Activated T-helper 1 cell treated with anti-CD3 and anti-CD28 coated beads, Interleukin-12 subunit alpha, Interleukin-12 subunit beta, Interleukin-2, Interleukin-4 antibody, amounts not matched to agents 30 ng/mL and 10 ng/mL and 1 ng/mL, durations not matched to agents 14 hours and 24 hours and 36 hours (primary cell): ENCODE measurements at regions of chr1 and their contacts with region 1.

Region 1: DNA sequence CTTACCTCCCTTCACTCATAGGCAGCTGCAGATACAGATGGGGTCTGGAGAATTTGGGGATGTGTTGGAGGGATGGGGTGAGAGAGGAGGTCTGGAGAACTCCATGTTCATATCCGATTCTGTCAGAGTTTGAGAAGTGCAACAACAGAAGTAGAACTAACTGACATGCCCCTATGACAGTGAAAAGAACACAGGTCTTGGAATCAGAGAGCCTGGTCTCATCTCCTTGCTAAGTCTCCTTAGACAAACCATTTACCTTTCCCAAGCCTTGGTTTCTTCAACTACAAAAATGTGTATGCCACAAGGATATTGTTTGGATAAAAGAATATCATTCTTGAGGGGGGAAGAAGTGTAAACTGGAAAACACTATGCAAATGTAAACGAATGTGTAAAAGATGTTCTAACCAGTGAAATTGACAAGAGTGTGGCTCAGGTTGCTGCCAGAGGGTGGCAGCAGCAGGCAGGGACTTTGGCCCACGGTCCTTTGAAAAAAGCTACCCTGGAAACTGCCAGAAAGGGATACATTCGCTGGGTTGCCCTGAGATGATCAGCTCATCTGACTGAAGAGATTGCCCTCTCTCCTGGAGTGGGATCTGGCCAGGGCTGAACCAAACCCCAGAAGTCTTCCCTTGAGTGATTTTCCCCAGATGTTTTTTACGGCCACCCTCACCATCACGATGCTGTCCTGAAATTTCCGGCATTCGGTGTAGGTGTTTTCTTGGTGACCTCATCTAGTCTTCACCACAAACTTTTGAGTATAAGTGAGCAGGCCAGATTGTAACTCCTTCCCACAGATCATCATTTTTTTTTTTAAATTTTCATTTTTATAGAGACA is 17.0 kb upstream of the CD2 start:
- DNase-seq: peak; percentile 70
- H3K4me3 Mint-ChIP-seq: peak overlapping the region; percentile 66
- H3K27ac Mint-ChIP-seq: peak overlapping the region; percentile 99
- H3K4me1 Mint-ChIP-seq: peaks cover 79% of the 10 kb centered on the region
- H3K27me3 Mint-ChIP-seq: no peaks in the 10 kb centered on the region

Region 2: GRCh38 chr1:116556289-116557006 is 180.8 kb before region 1 on chr1:
- intact Hi-C with region 1: loop called (anchors 2 kb)
- DNase-seq: peak; percentile 67
- H3K4me3 Mint-ChIP-seq: peak overlapping the region; percentile 9
- H3K27ac Mint-ChIP-seq: peak overlapping the region; percentile 77
- H3K4me1 Mint-ChIP-seq: peaks cover 86% of the 10 kb centered on the region
- H3K27me3 Mint-ChIP-seq: no peaks in the 10 kb centered on the region

Region 3: DNA sequence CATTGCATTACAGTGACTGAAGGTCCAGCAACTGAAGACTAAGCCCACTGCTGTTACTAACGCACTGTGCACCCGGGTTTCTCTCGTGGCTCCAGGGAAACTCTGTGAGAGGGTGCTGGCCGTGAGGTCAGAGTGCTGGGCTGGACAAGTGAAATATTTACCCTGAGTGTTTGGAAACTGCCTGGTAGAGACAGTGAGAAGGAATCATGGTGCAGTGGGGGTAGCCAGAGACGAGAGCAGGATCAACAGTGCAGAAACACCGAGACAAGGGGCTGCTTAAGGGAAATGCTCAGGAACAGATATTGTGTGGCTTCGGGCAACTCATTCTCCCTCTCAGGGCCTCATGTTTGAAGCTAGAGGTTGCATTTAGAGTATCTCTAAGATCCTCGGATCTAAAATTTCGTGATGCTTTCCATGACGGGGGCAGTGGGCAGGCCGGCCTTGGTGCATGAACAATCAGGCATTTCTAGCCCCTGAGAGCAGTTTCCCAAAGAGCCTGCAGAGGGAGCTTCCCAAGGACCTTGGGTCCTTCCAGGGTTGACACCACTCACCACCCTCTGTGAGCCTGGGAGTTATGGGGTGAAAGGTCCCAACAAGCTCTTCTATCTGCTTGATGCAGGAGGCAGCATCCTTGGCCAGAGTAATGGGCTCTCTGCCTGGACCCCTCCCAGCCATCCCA is 26.7 kb after region 1 on chr1:
- intact Hi-C with region 1: loop called (anchors 1 kb)
- DNase-seq: peak; percentile 50
- H3K4me3 Mint-ChIP-seq: peak overlapping the region; percentile 84
- H3K27ac Mint-ChIP-seq: peak overlapping the region; percentile 100
- H3K4me1 Mint-ChIP-seq: peaks cover 95% of the 10 kb centered on the region
- H3K27me3 Mint-ChIP-seq: peaks cover 3% of the 10 kb centered on the region

Region 4: GRCh38 chr1:116878804-116879477 is 141.7 kb after region 1 on chr1:
- intact Hi-C with region 1: loop called (anchors 1 kb)
- DNase-seq: no peak
- H3K4me3 Mint-ChIP-seq: no peak overlapping the region
- H3K27ac Mint-ChIP-seq: no peak overlapping the region
- H3K4me1 Mint-ChIP-seq: peaks cover 21% of the 10 kb centered on the region
- H3K27me3 Mint-ChIP-seq: no peaks in the 10 kb centered on the region

Region 5: GRCh38 chr1:116987256-116987555 is 250.0 kb after region 1 on chr1:
- intact Hi-C with region 1: loop called (anchors 5 kb)
- DNase-seq: peak; percentile 48
- H3K4me3 Mint-ChIP-seq: peak overlapping the region; percentile 80
- H3K27ac Mint-ChIP-seq: peak overlapping the region; percentile 92
- H3K4me1 Mint-ChIP-seq: peaks cover 49% of the 10 kb centered on the region
- H3K27me3 Mint-ChIP-seq: no peaks in the 10 kb centered on the region

Region 6: DNA sequence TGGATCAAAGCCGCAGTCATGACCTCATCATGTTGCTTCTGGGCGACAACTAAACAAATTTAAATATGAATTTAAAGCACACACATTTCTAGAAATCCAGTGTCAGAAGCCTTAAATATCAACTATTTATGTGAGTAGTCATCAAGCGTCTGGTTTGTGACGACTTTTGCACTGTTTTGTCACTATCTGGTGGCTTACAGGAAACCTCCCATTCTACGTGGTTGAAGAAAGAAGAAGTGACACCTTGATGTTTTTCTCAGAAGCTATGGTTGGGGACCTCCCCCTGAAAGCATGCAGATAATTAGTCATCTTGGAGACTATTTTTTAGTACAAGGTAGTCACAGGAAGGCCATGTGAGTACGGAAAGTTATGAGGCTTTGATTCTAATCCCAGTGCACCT is 927.1 kb after region 1 on chr1:
- intact Hi-C with region 1: loop called (anchors 10 kb)
- DNase-seq: peak; percentile 73
- H3K4me3 Mint-ChIP-seq: peak overlapping the region; percentile 57
- H3K27ac Mint-ChIP-seq: peak overlapping the region; percentile 84
- H3K4me1 Mint-ChIP-seq: peaks cover 88% of the 10 kb centered on the region
- H3K27me3 Mint-ChIP-seq: peaks cover 6% of the 10 kb centered on the region